Activated CD4-positive, alpha-beta T cell treated with anti-CD3 and anti-CD28 coated beads for 36 hours (primary cell): ENCODE measurements at regions of chr11 and their contacts with region 1.

Region 1: GRCh38 chr11:60345489-60345888 is 18.4 kb downstream of the MS4A6E start:
- DNase-seq: peak; percentile 65
- ATAC-seq: no peak
- H3K4me3 Mint-ChIP-seq: no peak overlapping the region
- H3K27ac Mint-ChIP-seq: no peak overlapping the region
- H3K4me1 Mint-ChIP-seq: no peaks in the 10 kb centered on the region
- H3K27me3 Mint-ChIP-seq: peaks cover 25% of the 10 kb centered on the region

Region 2: DNA sequence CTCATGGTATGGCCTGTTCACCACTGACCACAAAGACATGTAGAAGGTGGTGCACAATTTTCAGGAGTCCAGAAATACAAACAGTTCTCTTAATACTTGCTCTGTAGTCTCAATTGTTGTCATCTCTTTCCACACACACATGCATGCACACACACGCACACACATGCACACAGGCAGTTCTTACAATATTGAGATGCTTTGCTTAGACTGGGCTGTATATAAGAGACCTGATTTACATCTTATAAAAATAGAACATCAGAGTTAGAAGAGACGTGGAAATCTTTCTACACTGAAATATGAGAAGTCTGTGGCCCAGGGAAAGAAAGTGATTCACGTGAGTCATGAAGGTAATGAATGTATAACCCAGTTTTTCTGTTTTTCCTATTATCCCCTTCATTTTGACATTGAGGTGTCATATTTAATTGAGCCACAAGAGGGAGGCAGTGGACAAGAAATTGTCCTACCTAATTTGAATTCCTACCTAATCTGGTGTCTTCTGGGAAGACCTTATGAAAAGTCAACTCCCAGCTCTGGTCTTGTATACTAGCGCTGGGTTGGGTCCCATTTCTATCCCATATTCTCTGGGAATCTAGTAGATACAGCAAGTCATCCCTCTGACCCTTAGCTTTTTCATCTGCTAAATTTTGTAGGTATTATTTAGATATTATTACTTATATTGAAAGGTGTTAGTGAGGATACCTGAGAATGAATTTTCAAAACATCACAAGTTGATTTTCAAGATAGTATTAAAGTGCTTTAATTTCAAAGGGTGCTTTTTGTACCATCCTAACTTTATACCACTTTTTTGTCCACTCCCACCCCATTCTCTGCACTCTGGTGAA is 79.9 kb before region 1 on chr11:
- CTCF ChIA-PET with region 1: interaction called, 7 read pairs
- POLR2A ChIA-PET with region 1: no interaction called
- intact Hi-C with region 1: loop called (anchors 1 to 2 kb)
- DNase-seq: peak; percentile 26
- ATAC-seq: peak; percentile 55
- H3K4me3 Mint-ChIP-seq: no peak overlapping the region
- H3K27ac Mint-ChIP-seq: no peak overlapping the region
- H3K4me1 Mint-ChIP-seq: no peaks in the 10 kb centered on the region
- H3K27me3 Mint-ChIP-seq: peaks cover 20% of the 10 kb centered on the region

Region 3: DNA sequence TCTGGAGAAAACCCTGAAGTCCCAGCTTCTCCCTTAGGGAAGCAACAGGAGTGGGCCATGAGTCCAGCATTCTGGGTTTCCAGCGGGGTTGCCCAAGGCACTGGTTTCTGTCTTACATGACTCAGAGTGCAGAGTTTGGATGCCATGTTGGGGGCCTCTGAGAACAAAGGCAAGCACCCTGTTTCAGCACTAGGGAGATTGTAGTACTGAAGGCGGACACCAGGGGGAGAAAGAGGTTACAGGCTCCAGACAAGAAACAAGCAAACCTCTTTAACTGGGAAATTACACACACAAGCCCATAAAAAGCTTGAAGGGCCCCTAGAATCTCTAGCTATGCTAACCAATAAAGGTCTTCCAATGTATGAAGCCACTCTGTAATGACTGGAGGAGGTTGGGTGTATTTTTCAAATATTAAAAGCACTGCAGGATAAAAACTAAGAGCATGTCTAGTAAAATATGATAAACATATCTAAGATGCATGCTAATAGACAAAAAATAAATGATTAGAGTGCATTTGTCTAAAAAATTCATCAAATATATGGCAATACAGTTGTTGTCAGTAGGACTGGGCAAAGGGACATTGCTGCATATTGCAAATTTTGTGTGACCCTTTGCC is 11.4 kb before region 1 on chr11:
- CTCF ChIA-PET with region 1: interaction called, 16 read pairs
- POLR2A ChIA-PET with region 1: no interaction called
- intact Hi-C with region 1: no loop called
- DNase-seq: peak; percentile 85
- ATAC-seq: peak; percentile 86
- H3K4me3 Mint-ChIP-seq: no peak overlapping the region
- H3K27ac Mint-ChIP-seq: no peak overlapping the region
- H3K4me1 Mint-ChIP-seq: peaks cover 2% of the 10 kb centered on the region
- H3K27me3 Mint-ChIP-seq: peaks cover 16% of the 10 kb centered on the region

Region 4: GRCh38 chr11:60477035-60477445 is 131.6 kb after region 1 on chr11:
- CTCF ChIA-PET with region 1: no interaction called
- POLR2A ChIA-PET with region 1: no interaction called
- intact Hi-C with region 1: no loop called
- DNase-seq: no peak
- ATAC-seq: no peak
- H3K4me3 Mint-ChIP-seq: no peak overlapping the region
- H3K27ac Mint-ChIP-seq: no peak overlapping the region
- H3K4me1 Mint-ChIP-seq: no peaks in the 10 kb centered on the region
- H3K27me3 Mint-ChIP-seq: peaks cover 13% of the 10 kb centered on the region